ENCODE measurements at regions of chr1 and their contacts with region 1.

Region 1: DNA sequence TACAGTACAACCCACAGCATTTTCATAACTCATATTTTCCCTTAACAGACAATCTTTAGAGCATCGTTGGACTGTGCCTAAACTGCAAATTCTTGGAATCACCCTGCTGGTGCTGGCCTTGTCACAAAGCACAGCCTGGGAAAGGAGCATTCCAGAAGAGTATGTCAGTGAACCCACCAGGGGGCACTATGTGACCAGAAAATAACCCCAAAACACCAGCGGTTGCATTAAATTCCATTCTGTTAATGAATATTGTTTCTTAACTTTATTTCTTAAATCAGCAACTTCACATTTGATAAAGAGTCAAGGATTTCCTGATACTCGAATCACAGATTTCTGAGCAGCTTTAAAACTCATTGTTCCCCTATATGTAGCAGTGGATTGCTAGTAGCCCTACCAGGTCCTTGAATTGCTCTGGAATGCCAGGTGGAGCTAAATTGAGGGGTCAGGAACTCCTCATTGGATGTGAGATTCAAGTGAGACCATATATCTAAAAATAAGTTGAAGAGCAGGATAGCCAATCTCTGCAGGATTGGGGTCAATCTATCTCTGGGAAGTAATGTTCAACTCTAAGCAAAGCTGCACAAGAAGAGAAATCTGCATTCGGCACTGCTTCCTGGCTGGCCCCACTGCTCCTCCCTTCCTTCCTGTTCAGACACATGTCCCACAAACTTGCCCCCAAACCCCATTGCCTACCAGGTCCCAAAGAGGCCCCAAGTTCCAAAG is 12.7 kb upstream of the RAB4A start:
- DNase-seq: peak; percentile 24 to 82 (median 67)
- ATAC-seq: peak; percentile 25
- H3K4me3 ChIP-seq: no peak overlapping the region
- H3K4me3 Mint-ChIP-seq: peak overlapping the region; percentile 4
- H3K27ac ChIP-seq: peak overlapping the region in 1 of 2 experiments; percentile 33
- H3K27ac Mint-ChIP-seq: peak overlapping the region; percentile 80
- H3K4me1 ChIP-seq: peaks cover 25% of the 10 kb centered on the region
- H3K4me1 Mint-ChIP-seq: peaks cover 27% of the 10 kb centered on the region
- H3K27me3 ChIP-seq: no peaks in the 10 kb centered on the region
- H3K27me3 Mint-ChIP-seq: no peaks in the 10 kb centered on the region
- CTCF ChIP-seq: peak; percentile 93

Region 2: GRCh38 chr1:228691926-228692325 is 566.3 kb before region 1 on chr1:
- CTCF ChIA-PET with region 1: interaction called, 53 read pairs
- POLR2A ChIA-PET with region 1: interaction called, 8 read pairs
- intact Hi-C with region 1: loop called (anchors 1 to 2 kb)
- DNase-seq: peak in 3 of 9 experiments; percentile 25 to 70 (median 60)
- ATAC-seq: no peak
- H3K4me3 ChIP-seq: no peak overlapping the region
- H3K4me3 Mint-ChIP-seq: no peak overlapping the region
- H3K27ac ChIP-seq: no peak overlapping the region
- H3K27ac Mint-ChIP-seq: no peak overlapping the region
- H3K4me1 ChIP-seq: peaks cover 9% of the 10 kb centered on the region
- H3K4me1 Mint-ChIP-seq: peaks cover 10% of the 10 kb centered on the region
- H3K27me3 ChIP-seq: no peaks in the 10 kb centered on the region
- H3K27me3 Mint-ChIP-seq: peaks cover 5% of the 10 kb centered on the region
- CTCF ChIP-seq: peak; percentile 51

Region 3: GRCh38 chr1:229244091-229244490 is 14.1 kb before region 1 on chr1:
- CTCF ChIA-PET with region 1: interaction called, 10 read pairs
- POLR2A ChIA-PET with region 1: interaction called, 3 read pairs
- intact Hi-C with region 1: no loop called
- DNase-seq: no peak
- ATAC-seq: no peak
- H3K4me3 ChIP-seq: no peak overlapping the region
- H3K4me3 Mint-ChIP-seq: no peak overlapping the region
- H3K27ac ChIP-seq: no peak overlapping the region
- H3K27ac Mint-ChIP-seq: no peak overlapping the region
- H3K4me1 ChIP-seq: peaks cover 7% of the 10 kb centered on the region
- H3K4me1 Mint-ChIP-seq: peaks cover 10% of the 10 kb centered on the region
- H3K27me3 ChIP-seq: no peaks in the 10 kb centered on the region
- H3K27me3 Mint-ChIP-seq: no peaks in the 10 kb centered on the region
- CTCF ChIP-seq: no peak

Region 4: DNA sequence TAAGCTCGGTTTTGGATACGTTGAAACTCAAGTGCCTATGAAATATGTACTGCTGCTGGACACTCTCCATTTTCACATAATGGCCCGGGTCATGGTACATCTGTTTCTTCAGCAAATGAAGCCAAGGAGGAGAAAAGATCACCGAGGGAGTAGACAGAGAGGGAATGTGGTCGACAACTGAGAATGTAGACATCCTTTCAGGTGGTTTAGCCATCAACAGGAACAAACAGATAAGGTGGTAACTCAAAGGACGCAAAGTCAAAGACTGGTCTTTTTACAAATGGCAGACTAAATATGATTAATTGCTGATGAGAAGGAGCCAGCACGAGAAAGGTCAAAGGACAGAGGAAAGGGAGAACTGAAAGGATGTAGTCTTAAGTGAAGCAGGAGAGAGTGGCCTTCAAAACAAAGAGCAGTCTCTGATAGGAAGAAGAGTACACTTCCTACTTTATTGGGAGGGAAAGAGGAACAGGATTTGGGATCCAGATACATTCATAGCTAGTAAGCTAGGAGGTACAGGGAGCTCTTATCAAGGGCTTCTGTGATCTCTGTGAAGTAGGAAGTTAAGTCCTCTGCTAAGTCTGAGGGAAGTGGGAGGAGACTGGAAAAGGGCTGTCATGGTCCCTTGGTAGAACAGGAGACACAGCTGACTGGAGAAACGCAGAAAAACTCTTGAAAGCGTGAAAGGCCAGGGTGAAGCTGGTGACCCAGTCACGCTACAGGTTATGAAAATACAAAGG is 221.6 kb after region 1 on chr1:
- CTCF ChIA-PET with region 1: interaction called, 92 read pairs
- POLR2A ChIA-PET with region 1: interaction called, 4 read pairs
- intact Hi-C with region 1: loop called (anchors 1 kb)
- DNase-seq: peak in 1 of 9 experiments; percentile 23
- ATAC-seq: no peak
- H3K4me3 ChIP-seq: no peak overlapping the region
- H3K4me3 Mint-ChIP-seq: no peak overlapping the region
- H3K27ac ChIP-seq: no peak overlapping the region
- H3K27ac Mint-ChIP-seq: no peak overlapping the region
- H3K4me1 ChIP-seq: no peaks in the 10 kb centered on the region
- H3K4me1 Mint-ChIP-seq: peaks cover 13% of the 10 kb centered on the region
- H3K27me3 ChIP-seq: no peaks in the 10 kb centered on the region
- H3K27me3 Mint-ChIP-seq: no peaks in the 10 kb centered on the region
- CTCF ChIP-seq: no peak

Region 5: DNA sequence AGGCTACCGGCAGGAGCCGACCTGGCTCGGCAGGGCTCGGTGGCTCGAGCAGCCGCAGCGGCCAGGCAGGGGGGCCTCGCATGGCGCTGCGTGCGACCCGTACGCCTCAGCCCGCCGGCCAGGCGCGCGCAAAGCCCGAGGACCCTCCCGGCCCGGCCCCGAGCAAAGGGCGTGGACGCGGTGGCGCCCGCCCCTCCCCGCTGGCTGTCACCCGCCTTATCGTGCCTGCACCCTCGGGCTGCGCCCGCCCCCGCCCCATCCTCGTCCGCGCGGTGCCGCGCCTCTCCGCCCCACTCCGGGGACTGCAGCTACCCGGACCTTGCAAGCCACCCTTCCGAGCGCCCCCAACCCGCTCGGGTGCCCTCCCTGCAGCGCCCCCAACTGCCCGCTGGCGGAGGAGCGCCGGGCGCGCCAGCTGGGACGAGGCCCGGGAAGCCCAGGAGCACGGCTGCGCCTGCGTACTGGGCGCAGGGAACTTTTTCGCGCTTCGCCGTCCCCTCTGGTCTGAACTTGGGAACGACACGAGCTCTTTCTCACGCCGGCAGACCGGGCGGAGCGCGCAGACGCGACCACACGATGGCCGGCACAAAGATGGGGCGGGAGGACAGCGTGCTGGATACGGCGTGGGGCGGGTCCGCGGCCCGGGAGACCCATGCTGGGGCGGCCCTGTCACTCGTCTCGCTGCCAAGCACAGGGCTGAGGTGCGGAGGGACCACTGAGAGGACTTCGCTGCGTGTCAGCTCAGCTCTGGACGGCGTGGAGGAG is 300.6 kb after region 1 on chr1 and contains the start of gene ABCB10:
- CTCF ChIA-PET with region 1: interaction called, 4 read pairs
- POLR2A ChIA-PET with region 1: interaction called, 6 read pairs
- intact Hi-C with region 1: loop called in 1 of 2 experiments (anchors 5 kb)
- DNase-seq: peak; percentile 56 to 93 (median 81)
- ATAC-seq: peak; percentile 81
- H3K4me3 ChIP-seq: peak within 1 kb of the TSS; percentile 74 to 82
- H3K4me3 Mint-ChIP-seq: peak within 1 kb of the TSS; percentile 95
- H3K27ac ChIP-seq: peak within 1 kb of the TSS; percentile 52 to 70
- H3K27ac Mint-ChIP-seq: peak within 1 kb of the TSS; percentile 90
- H3K4me1 ChIP-seq: peaks cover 18% of the 10 kb centered on the region
- H3K4me1 Mint-ChIP-seq: peaks cover 37% of the 10 kb centered on the region
- H3K27me3 ChIP-seq: no peaks in the 10 kb centered on the region
- H3K27me3 Mint-ChIP-seq: no peaks in the 10 kb centered on the region
- CTCF ChIP-seq: peak; percentile 30
- total RNA-seq, gene ABCB10: 6.1 to 7.6 TPM

Region 6: DNA sequence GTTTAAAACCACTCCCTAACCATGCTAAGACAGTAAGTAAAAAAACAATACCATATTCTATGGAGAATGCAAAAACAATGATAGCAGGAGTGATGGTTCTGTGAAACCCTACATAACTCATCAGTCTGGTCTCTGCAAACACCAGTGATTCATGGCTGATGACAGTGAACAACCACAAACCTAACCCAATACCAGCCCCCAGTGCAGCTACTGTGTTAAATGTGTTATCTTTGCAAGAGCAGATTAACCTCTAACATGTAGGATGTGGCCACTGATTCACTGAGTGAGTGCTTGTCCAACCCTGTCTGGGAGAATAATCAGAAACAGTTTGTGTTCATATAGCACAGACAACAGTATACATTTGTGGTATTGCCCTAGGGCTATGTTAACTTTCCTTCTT is 1283.9 kb after region 1 on chr1:
- CTCF ChIA-PET with region 1: no interaction called
- POLR2A ChIA-PET with region 1: no interaction called
- intact Hi-C with region 1: no loop called
- DNase-seq: peak in 2 of 9 experiments; percentile 26 to 29
- ATAC-seq: no peak
- H3K4me3 ChIP-seq: no peak overlapping the region
- H3K4me3 Mint-ChIP-seq: no peak overlapping the region
- H3K27ac ChIP-seq: no peak overlapping the region
- H3K27ac Mint-ChIP-seq: no peak overlapping the region
- H3K4me1 ChIP-seq: no peaks in the 10 kb centered on the region
- H3K4me1 Mint-ChIP-seq: no peaks in the 10 kb centered on the region
- H3K27me3 ChIP-seq: no peaks in the 10 kb centered on the region
- H3K27me3 Mint-ChIP-seq: peaks cover 14% of the 10 kb centered on the region
- CTCF ChIP-seq: no peak